ENCODE measurements at regions of chr17 and their contacts with region 1.

Region 1: DNA sequence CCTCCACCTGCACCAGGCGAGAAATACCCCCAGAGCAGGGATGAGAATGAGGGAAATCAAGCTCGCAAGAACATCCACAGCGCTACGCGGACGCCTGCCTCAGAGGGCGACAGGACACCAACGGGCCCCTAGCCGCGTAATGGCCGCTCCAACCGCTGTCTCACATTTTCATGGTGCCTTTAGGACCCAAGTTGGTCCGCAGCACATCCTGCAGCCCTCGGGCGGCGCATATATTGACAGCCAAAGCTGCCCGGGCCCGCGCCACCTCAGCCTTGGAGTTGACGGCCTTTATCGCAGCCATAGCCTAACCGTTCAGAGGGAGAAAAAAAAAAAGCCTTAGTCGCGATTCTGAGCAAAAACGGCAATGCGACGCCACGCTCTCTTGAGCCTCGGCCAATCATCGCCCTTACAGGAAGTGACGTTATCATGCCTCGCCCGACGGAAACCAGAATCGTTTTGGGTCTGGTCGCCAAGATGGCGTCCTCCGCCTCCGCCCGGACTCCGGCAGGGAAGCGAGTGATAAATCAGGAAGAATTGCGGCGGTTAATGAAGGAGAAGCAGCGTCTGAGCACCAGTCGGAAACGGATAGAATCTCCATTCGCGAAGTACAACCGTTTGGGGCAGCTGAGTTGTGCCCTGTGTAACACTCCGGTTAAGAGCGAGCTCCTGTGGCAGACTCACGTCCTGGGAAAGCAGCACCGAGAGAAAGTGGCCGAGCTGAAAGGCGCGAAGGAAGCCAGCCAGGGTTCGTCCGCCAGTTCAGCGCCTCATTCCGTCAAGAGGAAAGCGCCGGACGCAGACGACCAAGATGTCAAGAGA is at the starts of genes CCT6B and ZNF830:
- DNase-seq: peak; percentile 93
- H3K4me3 Mint-ChIP-seq: peak within 1 kb of the TSS; percentile 98
- H3K27ac Mint-ChIP-seq: peak within 1 kb of the TSS; percentile 97
- H3K4me1 Mint-ChIP-seq: peaks cover 31% of the 10 kb centered on the region
- H3K27me3 Mint-ChIP-seq: peaks cover 5% of the 10 kb centered on the region
- total RNA-seq, gene CCT6B: 1.5 to 1.9 TPM
- total RNA-seq, gene ZNF830: 25.2 to 25.4 TPM

Region 2: DNA sequence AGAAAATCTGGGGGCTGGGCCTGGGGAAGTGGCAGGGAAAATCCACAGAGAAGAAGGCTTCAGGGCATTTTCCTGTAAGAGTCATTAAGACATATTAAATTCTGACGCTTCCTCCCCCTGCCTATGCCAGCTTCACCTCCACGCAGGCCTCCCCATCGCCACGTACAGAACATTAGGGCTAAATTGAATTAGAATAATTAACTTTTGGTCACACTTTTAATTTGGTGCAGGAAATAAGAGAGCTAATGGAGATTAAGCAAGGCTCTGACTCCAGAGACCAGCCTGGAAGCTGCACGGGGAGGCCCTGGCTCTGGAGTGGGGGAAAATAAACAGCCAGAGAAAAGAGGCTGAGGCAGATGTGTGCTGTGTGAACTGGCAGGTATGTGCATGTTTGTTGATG is 148.0 kb before region 1 on chr17:
- CTCF ChIA-PET with region 1: no interaction called
- POLR2A ChIA-PET with region 1: no interaction called
- DNase-seq: no peak
- H3K4me3 Mint-ChIP-seq: no peak overlapping the region
- H3K27ac Mint-ChIP-seq: no peak overlapping the region
- H3K4me1 Mint-ChIP-seq: no peaks in the 10 kb centered on the region
- H3K27me3 Mint-ChIP-seq: peaks cover 3% of the 10 kb centered on the region

Region 3: GRCh38 chr17:34840750-34841149 is 120.6 kb before region 1 on chr17:
- CTCF ChIA-PET with region 1: no interaction called
- POLR2A ChIA-PET with region 1: no interaction called
- DNase-seq: no peak
- H3K4me3 Mint-ChIP-seq: no peak overlapping the region
- H3K27ac Mint-ChIP-seq: no peak overlapping the region
- H3K4me1 Mint-ChIP-seq: peaks cover 4% of the 10 kb centered on the region
- H3K27me3 Mint-ChIP-seq: no peaks in the 10 kb centered on the region

Region 4: GRCh38 chr17:34920676-34921075 is 40.6 kb before region 1 on chr17:
- CTCF ChIA-PET with region 1: no interaction called
- POLR2A ChIA-PET with region 1: no interaction called
- DNase-seq: no peak
- H3K4me3 Mint-ChIP-seq: no peak overlapping the region
- H3K27ac Mint-ChIP-seq: no peak overlapping the region
- H3K4me1 Mint-ChIP-seq: no peaks in the 10 kb centered on the region
- H3K27me3 Mint-ChIP-seq: no peaks in the 10 kb centered on the region

Region 5: GRCh38 chr17:34974794-34975785 is 13.8 kb after region 1 on chr17:
- CTCF ChIA-PET with region 1: interaction called, 3 read pairs
- POLR2A ChIA-PET with region 1: interaction called, 56 read pairs
- DNase-seq: peak; percentile 26
- H3K4me3 Mint-ChIP-seq: peak overlapping the region; percentile 21
- H3K27ac Mint-ChIP-seq: peak overlapping the region; percentile 80
- H3K4me1 Mint-ChIP-seq: peaks cover 46% of the 10 kb centered on the region
- H3K27me3 Mint-ChIP-seq: no peaks in the 10 kb centered on the region

Region 6: GRCh38 chr17:35141681-35142466 is 180.6 kb after region 1 on chr17 and contains the start of gene NLE1:
- CTCF ChIA-PET with region 1: no interaction called
- POLR2A ChIA-PET with region 1: interaction called, 10 read pairs
- DNase-seq: peak; percentile 89
- H3K4me3 Mint-ChIP-seq: peak within 1 kb of the TSS; percentile 77
- H3K27ac Mint-ChIP-seq: peak within 1 kb of the TSS; percentile 65
- H3K4me1 Mint-ChIP-seq: peaks cover 30% of the 10 kb centered on the region
- H3K27me3 Mint-ChIP-seq: no peaks in the 10 kb centered on the region
- total RNA-seq, gene NLE1: 13.4 to 14.0 TPM